Activated CD4-positive, alpha-beta T cell treated with anti-CD3 and anti-CD28 coated beads for 36 hours (primary cell): ENCODE measurements at regions of chr17 and their contacts with region 1.

Region 1: DNA sequence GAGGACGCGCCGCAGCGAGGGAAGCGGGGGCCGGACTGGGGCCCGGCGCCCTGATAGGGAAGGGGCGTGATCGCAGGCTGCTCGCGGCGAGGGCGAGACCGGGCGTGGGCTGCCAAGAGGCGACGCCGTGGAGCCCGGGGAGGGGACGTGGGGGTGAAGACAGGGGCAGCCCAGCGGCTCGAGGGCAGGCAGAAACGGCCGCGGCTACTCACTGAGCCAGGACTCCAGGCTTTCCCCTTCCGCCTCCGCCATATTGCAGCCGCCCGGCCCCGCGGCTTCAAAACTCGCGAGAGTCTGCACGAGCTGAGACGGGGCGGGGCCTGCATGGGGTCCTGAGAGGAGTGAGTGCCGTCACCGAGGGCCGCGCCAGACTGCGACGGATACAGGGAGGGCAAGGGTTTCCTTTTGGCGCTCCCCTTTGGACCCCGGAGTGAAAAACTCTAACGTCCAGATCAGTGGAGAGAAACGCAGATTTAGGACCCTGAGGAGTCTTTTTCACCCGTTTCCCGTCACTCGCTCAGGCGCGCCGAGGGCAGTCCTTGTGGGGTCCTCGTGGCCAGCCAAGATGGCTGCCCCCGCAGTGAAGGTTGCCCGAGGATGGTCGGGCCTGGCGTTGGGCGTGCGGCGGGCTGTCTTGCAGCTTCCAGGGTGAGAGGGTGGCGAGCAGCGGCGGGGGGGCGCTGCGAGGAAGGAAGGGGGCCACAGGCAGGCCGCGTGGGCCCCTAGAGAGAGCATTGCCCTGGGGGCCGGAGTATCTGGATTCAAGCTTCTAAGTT is at the starts of genes GGA3 and MRPS7:
- DNase-seq: peak; percentile 98
- ATAC-seq: peak; percentile 91
- H3K4me3 Mint-ChIP-seq: peak within 1 kb of the TSS; percentile 88
- H3K27ac Mint-ChIP-seq: peak within 1 kb of the TSS; percentile 96
- H3K4me1 Mint-ChIP-seq: peaks cover 48% of the 10 kb centered on the region
- H3K27me3 Mint-ChIP-seq: no peaks in the 10 kb centered on the region
- total RNA-seq, gene GGA3: 72.9 to 76.7 TPM
- total RNA-seq, gene MRPS7: 51.4 to 63.8 TPM

Region 2: DNA sequence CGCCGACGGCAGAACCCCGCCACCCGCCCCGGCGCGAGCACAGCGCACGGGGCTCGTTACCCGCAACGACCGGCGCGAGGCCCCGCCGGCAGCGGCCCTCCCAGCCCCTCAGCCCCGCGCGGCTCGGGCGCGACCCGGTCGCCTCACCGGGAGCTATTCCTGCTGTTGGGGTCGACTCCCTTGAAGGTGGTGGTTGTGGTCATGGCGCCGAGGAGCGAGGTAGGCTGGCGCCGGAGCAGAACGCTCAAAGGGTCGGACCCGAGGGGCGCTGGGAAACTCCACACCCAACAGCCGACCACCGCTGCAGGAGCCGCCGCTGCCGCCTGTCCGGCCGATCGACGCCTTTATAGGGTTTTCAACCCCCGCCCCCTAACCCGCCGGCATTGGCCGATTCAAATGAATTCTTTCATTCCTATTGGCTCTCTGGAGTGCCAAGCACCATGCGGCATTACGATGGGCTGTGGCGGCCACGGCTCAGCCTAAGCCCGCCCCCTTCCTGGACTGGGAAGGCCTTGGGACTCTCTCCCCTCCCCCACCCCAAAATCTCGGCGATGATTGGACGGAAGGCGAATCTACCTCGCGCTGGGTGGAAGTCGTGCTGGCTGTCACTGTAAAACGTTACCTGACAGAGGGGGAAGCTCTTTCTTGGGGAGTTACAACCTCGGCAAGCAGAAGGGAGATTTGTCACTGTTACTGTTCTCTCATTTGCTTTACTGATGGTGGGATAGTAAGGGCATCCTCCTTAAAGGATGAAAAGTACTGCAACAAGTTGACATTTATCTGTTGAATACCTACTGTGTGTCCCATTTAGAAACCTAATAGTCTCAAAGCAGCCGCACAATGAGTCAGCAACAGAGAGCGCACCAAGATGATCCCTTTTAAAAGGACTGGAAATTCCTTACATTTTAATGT is 107.1 kb before region 1 on chr17 and contains the start of gene JPT1:
- CTCF ChIA-PET with region 1: no interaction called
- POLR2A ChIA-PET with region 1: interaction called, 3 read pairs
- intact Hi-C with region 1: loop called in 1 of 2 experiments (anchors 1 kb)
- DNase-seq: peak; percentile 99
- ATAC-seq: peak; percentile 98
- H3K4me3 Mint-ChIP-seq: peak within 1 kb of the TSS; percentile 96
- H3K27ac Mint-ChIP-seq: peak within 1 kb of the TSS; percentile 89
- H3K4me1 Mint-ChIP-seq: peaks cover 36% of the 10 kb centered on the region
- H3K27me3 Mint-ChIP-seq: no peaks in the 10 kb centered on the region
- total RNA-seq, gene JPT1: 234 to 238 TPM

Region 3: GRCh38 chr17:75250009-75250471 is 11.5 kb before region 1 on chr17:
- CTCF ChIA-PET with region 1: interaction called, 46 read pairs
- POLR2A ChIA-PET with region 1: interaction called, 73 read pairs
- intact Hi-C with region 1: loop called (anchors 1 kb)
- DNase-seq: peak; percentile 90
- ATAC-seq: peak; percentile 97
- H3K4me3 Mint-ChIP-seq: peak overlapping the region; percentile 64
- H3K27ac Mint-ChIP-seq: peak overlapping the region; percentile 97
- H3K4me1 Mint-ChIP-seq: peaks cover 74% of the 10 kb centered on the region
- H3K27me3 Mint-ChIP-seq: no peaks in the 10 kb centered on the region

Region 4: GRCh38 chr17:75456417-75457046 is 195.0 kb after region 1 on chr17 and contains the start of gene TMEM94:
- CTCF ChIA-PET with region 1: no interaction called
- POLR2A ChIA-PET with region 1: interaction called, 6 read pairs
- intact Hi-C with region 1: loop called in 1 of 2 experiments (anchors 1 kb)
- DNase-seq: peak; percentile 95
- ATAC-seq: peak; percentile 99
- H3K4me3 Mint-ChIP-seq: peak within 1 kb of the TSS; percentile 89
- H3K27ac Mint-ChIP-seq: peak within 1 kb of the TSS; percentile 92
- H3K4me1 Mint-ChIP-seq: peaks cover 24% of the 10 kb centered on the region
- H3K27me3 Mint-ChIP-seq: no peaks in the 10 kb centered on the region
- total RNA-seq, gene TMEM94: 51.4 to 62.5 TPM